H1 (cell line): ENCODE measurements at regions of chr4 and their contacts with region 1.

Region 1: GRCh38 chr4:122602277-122603142 is 18.4 kb downstream of the IL21 start:
- DNase-seq: no peak
- H3K4me3 ChIP-seq: no peak overlapping the region
- H3K27ac ChIP-seq: no peak overlapping the region
- H3K4me1 ChIP-seq: peaks cover 2 to 13% (median 7%) of the 10 kb centered on the region in 4 experiments; a peak in 4 of 7 replicates
- H3K27me3 ChIP-seq: no peaks in the 10 kb centered on the region
- CTCF ChIP-seq: peak in 2 of 3 experiments; percentile 38 to 39; a peak in 2 of 4 replicates
- EP300 ChIP-seq: no peak
- POLR2A ChIP-seq: no peak
- RAD21 ChIP-seq: peak; percentile 67 to 75

Region 2: DNA sequence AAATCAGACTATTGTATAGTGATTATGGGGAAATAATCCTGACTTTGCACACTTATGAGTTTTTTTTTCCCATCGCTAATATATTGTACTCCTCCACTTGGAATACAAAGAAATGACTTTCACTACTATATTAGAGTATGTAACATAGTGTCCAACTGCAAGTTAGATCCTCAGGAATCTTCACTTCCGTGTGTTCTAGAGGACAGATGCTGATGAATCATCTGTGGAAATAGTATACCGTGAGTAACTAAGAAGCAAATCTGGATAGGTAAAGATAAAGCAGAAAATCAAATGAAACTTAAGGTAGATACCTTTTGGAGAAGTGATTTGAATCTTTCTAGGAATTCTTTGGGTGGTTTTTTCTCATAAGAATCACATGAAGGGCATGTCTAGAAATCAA is 10.0 kb after region 1 on chr4:
- CTCF ChIA-PET with region 1: interaction called, 14 read pairs
- POLR2A ChIA-PET with region 1: no interaction called
- DNase-seq: no peak
- H3K4me3 ChIP-seq: no peak overlapping the region
- H3K27ac ChIP-seq: no peak overlapping the region
- H3K4me1 ChIP-seq: peaks cover 0 to 2% (median under 1%) of the 10 kb centered on the region in 4 experiments; a peak in 1 of 7 replicates
- H3K27me3 ChIP-seq: no peaks in the 10 kb centered on the region
- CTCF ChIP-seq: no peak
- EP300 ChIP-seq: no peak
- POLR2A ChIP-seq: no peak
- RAD21 ChIP-seq: no peak

Region 3: DNA sequence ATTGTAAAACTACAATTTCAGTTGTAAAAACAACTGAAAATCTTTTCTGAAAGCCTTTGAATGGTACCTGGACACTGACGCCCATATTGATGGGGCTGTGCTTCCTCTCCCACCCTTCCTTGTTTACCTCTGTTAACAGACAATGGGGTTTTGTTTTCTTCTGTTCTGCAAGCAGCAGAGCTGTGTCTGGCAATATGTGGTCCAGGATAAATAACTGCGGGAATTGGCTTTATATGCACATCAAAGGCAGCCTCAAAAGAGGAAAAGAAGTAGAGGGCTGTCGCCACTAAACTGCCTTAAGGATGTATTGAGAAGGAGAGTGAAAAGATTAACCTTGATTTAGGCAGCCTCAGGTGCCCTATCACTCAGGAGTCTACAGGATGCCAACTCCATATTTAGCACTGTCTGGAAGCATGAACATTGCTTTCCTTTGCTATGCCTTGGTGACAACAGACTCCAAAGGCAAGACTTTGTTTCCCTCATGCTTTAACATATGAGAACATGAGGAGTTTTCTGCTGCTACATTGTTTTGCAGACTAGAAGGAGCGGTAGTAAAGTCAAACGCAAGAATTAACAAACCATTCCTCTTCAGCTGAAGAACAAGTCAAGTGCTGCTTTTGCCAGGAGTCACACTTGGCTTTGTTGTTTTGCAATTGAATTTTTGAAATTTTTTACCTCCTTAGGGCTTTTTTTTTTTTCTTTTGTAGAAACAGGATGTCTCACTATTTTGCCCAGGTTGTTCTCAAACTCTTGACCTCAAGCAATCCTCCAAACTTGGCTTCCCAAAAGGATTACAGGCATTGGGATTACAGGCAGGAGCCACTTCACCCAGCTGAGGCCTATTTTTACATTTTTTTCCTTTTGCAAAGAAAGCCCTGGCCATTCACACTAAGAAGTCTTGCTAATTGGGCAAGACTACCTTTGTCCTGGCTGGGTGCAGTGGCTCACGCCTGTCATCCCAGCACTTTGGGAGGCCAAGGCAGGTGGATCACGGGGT is 15.4 kb after region 1 on chr4:
- CTCF ChIA-PET with region 1: interaction called, 14 read pairs
- POLR2A ChIA-PET with region 1: no interaction called
- DNase-seq: no peak
- H3K4me3 ChIP-seq: no peak overlapping the region
- H3K27ac ChIP-seq: no peak overlapping the region
- H3K4me1 ChIP-seq: peaks cover 2 to 7% (median 5%) of the 10 kb centered on the region in 4 experiments; a peak in 6 of 7 replicates
- H3K27me3 ChIP-seq: no peaks in the 10 kb centered on the region
- CTCF ChIP-seq: no peak
- EP300 ChIP-seq: no peak
- POLR2A ChIP-seq: no peak
- RAD21 ChIP-seq: no peak